AG04449 (cell line): ENCODE measurements at regions of chr14 and their contacts with region 1.

Region 1: GRCh38 chr14:22929104-22929847 is at the start of gene PRMT5:
- DNase-seq: peak; percentile 99
- H3K4me3 ChIP-seq: peak within 1 kb of the TSS; percentile 100
- CTCF ChIP-seq: no peak

Region 2: DNA sequence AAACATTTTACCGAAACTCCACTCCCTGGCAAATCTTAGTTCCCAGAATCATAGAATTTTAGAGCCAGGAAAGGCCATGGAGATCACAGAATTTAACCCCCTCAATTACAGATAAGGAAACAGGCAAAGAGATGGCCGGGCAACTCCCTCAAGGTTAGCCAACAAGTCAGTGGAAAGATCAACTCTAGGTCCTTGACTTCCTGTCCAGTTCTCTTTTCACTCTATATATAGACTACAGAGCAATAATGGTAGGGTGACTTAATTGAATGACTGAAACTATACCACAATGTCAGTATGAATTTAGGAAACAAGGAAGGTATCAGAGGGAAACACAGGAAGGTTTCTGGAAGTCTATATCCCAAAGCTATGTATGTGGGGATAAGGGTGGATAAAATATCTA is 151.2 kb before region 1 on chr14:
- CTCF ChIA-PET with region 1: no interaction called
- POLR2A ChIA-PET with region 1: no interaction called
- DNase-seq: no peak
- H3K4me3 ChIP-seq: no peak overlapping the region
- CTCF ChIP-seq: no peak

Region 3: DNA sequence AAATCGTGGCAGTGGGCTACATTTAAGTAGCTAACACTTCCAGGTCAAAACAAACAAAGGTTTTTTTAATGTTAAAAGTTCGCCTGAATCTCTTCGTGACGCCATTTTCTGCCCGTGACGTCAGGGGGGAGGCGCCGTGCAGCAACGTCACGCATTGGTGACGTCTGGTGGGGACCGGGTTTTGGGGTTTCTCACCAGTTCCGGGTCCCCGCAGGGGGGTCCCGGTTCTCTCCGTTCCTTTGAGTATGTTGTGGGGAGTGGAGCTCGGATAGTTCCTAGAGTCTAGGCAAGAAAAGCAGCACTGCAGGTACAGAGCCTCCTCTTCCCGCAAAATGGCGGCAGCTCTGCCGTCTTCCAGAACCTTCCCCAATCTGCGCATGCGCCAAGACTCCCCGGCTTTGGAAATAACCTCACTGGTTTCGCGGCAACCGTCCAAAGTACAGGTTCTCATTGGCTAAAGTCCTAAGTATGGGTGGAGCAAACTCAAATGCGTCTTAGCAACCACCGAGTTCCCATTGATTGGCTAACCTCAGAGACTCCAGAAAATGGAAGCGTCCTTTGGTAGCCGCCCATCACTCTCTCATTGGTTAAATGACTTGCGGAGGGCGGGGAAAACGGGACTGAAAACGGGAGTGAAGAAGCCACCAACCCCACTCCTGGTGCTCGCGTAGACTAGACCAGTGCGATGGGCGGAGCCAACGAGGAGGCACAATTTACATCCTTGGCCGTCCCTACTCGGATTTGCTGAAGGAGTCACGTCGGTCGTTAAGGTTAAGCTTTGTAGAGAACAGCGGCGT is 10.3 kb before region 1 on chr14 and contains the start of gene RBM23:
- CTCF ChIA-PET with region 1: interaction called, 41 read pairs
- POLR2A ChIA-PET with region 1: interaction called, 13 read pairs
- DNase-seq: peak; percentile 99
- H3K4me3 ChIP-seq: peak within 1 kb of the TSS; percentile 76
- CTCF ChIP-seq: no peak

Region 4: DNA sequence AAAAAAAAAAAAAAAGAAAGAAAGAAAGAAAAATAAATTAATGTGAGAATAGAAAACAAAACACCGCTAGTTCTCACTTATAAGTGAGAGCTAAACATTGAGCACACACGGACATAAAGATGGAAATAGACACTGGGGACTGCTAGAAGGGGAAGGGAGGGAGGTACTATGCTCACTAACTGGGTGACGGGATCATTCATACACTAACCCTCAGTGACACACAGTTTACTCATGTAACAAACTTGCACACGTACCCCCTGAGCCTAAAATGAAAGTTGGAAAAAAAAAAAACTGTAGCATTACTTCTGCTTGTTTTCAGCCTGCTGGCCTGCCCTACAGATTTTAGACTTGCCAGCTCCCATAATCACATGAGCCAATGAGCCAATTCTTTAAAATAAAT is 10.4 kb after region 1 on chr14:
- CTCF ChIA-PET with region 1: interaction called, 100 read pairs
- POLR2A ChIA-PET with region 1: no interaction called
- DNase-seq: no peak
- H3K4me3 ChIP-seq: no peak overlapping the region
- CTCF ChIP-seq: no peak

Region 5: DNA sequence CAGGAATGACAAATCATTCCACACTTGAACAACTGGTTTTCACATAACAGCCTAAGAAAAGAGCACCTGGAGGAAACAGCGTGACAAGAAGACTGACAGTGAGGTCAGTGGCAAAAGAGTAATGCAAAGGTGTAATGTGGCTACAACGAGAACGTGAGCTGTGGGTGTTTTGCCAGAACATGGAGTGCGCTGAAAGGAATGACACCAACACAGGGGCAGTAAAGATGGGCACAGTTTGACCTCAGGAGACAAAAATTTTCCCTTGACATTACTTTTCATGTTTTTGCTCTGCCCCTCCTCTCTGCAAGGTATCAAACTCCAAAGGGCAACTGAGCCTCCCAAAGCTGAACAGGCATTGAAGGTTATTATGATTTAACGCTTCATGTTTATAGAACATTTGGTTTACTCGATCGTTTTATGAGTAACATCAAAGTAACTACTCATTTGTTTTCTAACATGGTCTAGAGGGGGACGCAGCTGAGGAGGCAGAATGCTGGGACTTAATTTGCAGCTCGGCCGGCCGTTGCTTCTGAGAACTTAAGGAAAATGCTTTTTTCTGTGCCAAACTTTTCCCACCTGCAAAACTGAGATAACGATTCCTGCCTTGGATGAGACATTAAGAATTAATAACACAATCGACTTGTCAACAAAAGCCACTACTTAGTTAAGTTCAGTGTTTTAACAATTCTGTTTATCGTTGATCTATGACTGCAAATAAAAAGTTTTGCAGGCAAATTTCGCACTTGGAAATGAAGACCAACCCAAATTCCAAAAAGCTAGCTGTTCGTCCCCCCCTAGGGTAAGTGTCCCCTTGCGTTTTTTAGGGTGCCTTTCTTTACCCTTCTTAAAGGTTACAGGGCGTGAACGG is 26.7 kb after region 1 on chr14:
- CTCF ChIA-PET with region 1: interaction called, 27 read pairs
- POLR2A ChIA-PET with region 1: interaction called, 3 read pairs
- DNase-seq: no peak
- H3K4me3 ChIP-seq: peak overlapping the region; percentile 66
- CTCF ChIP-seq: no peak

Region 6: DNA sequence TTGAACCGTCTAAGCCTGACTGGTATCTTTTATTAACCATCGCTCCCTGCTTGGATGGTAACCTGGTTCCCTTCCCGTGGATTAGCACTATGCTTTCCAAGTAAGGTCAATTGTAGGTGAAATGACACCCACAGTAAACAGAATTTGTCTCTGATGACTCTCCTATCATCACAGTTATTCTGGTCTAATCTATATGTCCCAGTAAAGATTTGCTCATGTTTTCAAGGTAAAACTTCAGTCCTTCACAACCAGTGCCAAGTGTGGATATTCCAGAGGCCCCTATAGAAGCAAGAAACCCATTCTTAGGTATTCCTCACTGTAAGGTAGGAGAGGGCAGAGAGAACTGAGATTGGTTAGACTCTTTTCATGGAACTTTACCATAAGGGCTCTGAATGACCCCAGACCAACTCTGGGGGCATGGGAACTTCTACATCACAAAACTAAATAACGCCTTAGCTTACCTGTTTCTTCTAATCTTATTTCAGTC is 37.5 kb after region 1 on chr14:
- CTCF ChIA-PET with region 1: interaction called, 25 read pairs
- POLR2A ChIA-PET with region 1: no interaction called
- DNase-seq: no peak
- H3K4me3 ChIP-seq: no peak overlapping the region
- CTCF ChIP-seq: no peak